Naive thymus-derived CD4-positive, alpha-beta T cell (primary cell): ENCODE measurements at regions of chr16 and their contacts with region 1.

Region 1: GRCh38 chr16:89828199-89828778 is at the start of gene SPIRE2:
- DNase-seq: peak; percentile 54 to 86 (median 73)
- ATAC-seq: peak; percentile 99
- H3K4me3 ChIP-seq: no peak within 1 kb of the TSS
- H3K4me3 Mint-ChIP-seq: peak within 1 kb of the TSS in 9 of 10 donors; percentile 46 to 70 (median 62)
- H3K27ac ChIP-seq: no peak within 1 kb of the TSS
- H3K27ac Mint-ChIP-seq: peak within 1 kb of the TSS in 1 of 9 donors; percentile 32
- H3K4me1 ChIP-seq: no peaks in the 10 kb centered on the region
- H3K4me1 Mint-ChIP-seq: peaks cover 2 to 10% (median 5%) of the 10 kb centered on the region in 7 donors
- H3K27me3 ChIP-seq: peaks cover 0 to 10% of the 10 kb centered on the region in 2 donors
- H3K27me3 Mint-ChIP-seq: peaks cover 12 to 37% (median 24%) of the 10 kb centered on the region in 5 donors
- total RNA-seq, gene SPIRE2: 1.2 to 3.5 (median 3.0) TPM

Region 2: GRCh38 chr16:89922884-89923690 is 94.8 kb after region 1 on chr16 and contains the start of gene TUBB3:
- CTCF ChIA-PET with region 1: no interaction called
- POLR2A ChIA-PET with region 1: no interaction called
- intact Hi-C with region 1: loop called in 1 of 2 experiments (anchors 2 kb)
- DNase-seq: peak in 1 of 9 donors; percentile 82
- ATAC-seq: peak; percentile 31
- H3K4me3 ChIP-seq: no peak within 1 kb of the TSS
- H3K4me3 Mint-ChIP-seq: peak within 1 kb of the TSS in 8 of 10 donors; percentile 27 to 78 (median 46)
- H3K27ac ChIP-seq: no peak within 1 kb of the TSS
- H3K27ac Mint-ChIP-seq: peak within 1 kb of the TSS in 1 of 9 donors; percentile 68
- H3K4me1 ChIP-seq: peaks cover 8 to 15% of the 10 kb centered on the region in 2 donors
- H3K4me1 Mint-ChIP-seq: peaks cover 12 to 41% (median 32%) of the 10 kb centered on the region in 7 donors
- H3K27me3 ChIP-seq: peaks cover 4 to 15% of the 10 kb centered on the region in 2 donors
- H3K27me3 Mint-ChIP-seq: peaks cover 6 to 42% (median 20%) of the 10 kb centered on the region in 5 donors
- total RNA-seq, gene TUBB3: 0.48 to 2.8 TPM in 2 of 5 experiments, not detected in the others